ENCODE measurements at regions of chr14 and their contacts with region 1.

Region 1: GRCh38 chr14:37246427-37246914 is 48.7 kb downstream of the MIPOL1 start:
- DNase-seq: no peak
- ATAC-seq: no peak

Region 2: DNA sequence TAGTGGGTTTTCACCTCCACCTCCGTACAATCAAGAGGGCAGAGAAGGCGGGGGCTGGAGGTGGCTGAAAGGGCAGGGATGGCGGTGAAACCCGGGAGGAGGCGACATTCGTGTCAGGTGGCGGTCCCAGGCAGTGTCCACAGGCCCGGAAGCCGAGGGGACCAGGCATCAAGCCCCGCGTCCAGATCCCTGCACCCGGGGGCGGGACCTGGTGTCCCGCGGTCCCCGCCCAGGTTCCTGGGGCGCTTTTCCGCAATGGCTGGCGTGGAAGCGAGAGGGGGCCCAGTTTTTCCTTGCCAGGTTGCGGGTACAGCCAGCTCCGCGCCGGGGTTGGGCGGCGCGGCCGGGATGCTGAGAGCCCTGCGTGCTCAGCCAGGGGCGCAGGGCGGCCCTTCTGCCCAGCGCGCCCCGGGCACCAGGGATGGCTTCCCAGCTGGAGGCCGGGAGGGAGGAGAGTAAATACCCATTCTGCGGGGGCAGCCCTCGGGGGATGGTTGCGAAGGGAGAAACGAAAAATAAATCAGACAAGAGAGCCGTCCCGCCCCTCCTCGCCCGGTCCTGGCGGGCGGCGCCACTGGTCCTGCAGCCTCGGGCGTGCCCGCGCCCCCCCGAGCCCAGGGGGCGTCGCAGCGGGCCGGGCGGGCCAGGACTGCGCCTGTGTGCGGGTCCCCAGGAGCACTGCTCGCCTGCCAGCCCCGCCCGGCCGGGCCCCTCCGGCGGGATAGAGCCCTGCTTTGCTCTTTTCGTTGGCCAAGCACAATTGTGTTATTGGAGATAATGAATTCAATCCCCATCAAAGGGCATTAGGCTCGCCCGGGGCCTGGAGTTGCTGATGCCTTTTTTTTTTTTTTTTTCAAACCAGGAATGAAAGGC is 337.1 kb after region 1 on chr14:
- intact Hi-C with region 1: no loop called
- DNase-seq: no peak
- ATAC-seq: no peak

Region 3: DNA sequence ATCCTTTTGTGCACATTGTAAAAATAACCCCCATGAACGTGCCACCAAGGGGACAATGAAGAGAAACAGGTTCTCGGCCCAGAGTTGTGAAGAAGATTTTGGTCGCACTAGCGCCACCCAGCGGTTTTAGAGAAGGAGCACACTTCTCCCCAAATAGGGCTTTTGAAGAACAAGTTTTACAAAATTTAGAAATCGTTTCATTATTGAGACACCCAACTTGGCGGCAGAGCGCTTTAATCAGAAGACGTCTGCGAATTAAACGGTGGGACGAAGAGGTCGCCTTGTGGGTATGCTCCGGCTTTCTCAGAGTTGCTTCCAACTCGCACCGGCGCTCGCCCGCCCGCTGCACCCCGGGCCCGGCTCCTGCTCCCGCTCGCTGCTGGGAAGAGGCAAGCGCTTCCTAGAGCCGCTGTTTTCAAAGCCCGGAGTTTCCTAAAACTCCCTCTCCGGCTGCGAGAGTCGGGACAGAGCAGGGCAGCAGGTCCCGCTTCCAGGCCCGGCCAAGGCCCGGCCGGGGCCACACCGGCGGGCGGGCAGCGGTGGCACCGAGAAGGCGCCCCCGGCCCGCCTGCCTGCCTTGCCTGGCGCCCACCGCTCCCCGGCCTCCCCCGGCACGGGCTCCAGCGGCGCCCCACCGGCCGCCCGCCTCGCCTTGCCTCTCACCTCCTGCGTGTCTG is 347.9 kb after region 1 on chr14:
- intact Hi-C with region 1: loop called in 1 of 2 experiments (anchors 10 kb)
- DNase-seq: peak; percentile 47
- ATAC-seq: peak in 1 of 2 donors; percentile 24

Measured in left cardiac atrium (tissue), 4 donors.